Left ventricle myocardium superior (tissue), 1 donor: ENCODE measurements at regions of chr3 and their contacts with region 1.

Region 1: DNA sequence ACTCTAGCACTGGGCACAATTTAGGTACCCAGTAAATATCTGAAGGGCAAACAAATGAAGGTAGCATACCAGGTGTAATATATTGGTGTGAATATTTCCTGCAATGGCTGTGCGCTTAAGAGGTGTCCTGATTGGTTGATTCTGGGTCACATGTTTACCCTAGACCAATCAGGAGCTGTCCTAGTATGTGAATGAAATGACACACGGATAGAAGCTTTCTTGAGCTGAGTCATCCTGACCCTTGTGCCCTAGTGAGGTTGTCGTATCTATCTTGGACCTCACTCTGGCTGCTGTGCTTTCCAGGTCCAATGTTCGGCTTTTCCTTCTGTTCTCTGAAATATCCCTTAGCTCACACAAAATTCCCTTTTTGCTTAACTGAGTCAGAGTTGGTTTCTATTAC is 58.1 kb upstream of the FOXP1 start:
- DNase-seq: no peak
- ATAC-seq: no peak

Region 2: DNA sequence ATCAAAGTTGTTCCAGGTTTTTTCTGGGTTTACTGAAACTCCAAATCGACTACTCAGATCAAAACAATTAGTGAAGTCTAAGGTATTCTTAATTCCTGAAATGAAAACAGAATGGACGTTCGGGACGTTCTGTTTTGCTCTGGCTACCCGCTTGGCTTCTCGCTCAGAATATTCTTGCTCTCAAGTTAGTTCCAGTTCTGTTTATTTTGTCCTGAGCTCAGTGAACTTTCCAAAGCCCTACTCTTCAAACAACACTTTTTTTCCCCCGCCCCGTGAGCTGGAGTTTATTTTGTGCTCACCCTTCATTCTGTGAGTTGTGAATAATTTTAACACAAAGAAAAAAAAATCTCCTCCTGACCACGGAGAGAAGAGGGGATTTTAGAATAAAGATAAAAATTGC is 1569.5 kb before region 1 on chr3:
- intact Hi-C with region 1: loop called (anchors 10 kb)
- DNase-seq: no peak
- ATAC-seq: no peak

Region 3: DNA sequence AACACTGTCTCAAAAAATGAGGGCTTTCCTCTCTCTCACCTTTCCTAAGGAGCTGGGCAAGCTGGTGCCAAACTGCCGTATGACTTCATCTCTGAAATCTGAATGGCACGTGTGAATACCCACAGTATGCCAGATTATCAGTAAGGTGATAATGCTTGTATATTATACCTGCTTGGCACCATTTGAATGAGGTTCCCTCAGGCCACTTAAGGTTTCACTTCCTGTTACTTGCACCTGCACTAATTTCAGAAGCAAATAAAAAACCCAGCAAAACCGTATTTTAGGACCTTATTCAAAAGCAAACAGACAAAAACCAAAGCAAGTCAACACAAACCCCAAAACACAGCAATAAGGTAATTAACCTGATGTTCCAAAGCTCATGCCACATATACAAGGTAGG is 77.8 kb before region 1 on chr3:
- intact Hi-C with region 1: no loop called
- DNase-seq: no peak
- ATAC-seq: no peak

Region 4: GRCh38 chr3:71893122-71893521 is 251.4 kb after region 1 on chr3:
- intact Hi-C with region 1: no loop called
- DNase-seq: no peak
- ATAC-seq: peak; percentile 37

Region 5: DNA sequence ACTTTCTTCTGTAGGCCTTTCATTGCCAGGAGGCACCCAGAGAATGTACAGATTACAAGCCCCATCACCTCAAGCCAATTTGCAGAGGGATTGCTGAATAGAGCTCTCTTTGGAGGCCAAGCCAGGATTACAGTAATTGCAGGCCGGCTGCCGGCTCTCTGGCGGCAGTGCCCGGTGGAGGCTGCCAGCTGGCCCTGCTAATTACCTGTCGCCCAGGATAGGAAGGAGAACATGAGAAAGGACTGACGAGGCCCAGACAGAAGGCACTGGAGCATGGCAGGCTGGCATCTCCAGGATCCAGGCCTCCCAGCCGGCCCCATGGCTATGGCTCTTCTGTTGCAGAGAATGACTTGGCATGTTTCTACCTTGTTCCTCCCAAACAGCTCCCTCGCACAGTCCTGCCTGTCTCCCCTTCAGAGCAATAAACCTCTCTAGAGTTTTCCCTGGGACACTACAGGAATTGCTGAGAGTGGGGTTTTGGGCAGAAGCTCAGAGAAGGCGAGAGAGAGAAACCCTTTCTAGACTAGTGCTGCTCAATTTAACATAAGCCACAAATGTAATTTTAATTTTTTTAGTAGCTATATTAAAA is 416.9 kb after region 1 on chr3:
- intact Hi-C with region 1: no loop called
- DNase-seq: peak; percentile 75
- ATAC-seq: peak; percentile 98